GM12878 (cell line): ENCODE measurements at regions of chr1 and their contacts with region 1.

Region 1: GRCh38 chr1:183804881-183805841 is at the start of gene RGL1:
- DNase-seq: no peak
- ATAC-seq: peak; percentile 72
- H3K4me3 ChIP-seq: peak within 1 kb of the TSS; percentile 90
- H3K27ac ChIP-seq: peak within 1 kb of the TSS; percentile 93
- H3K4me1 ChIP-seq: peaks cover 11% of the 10 kb centered on the region; the same call in 1 of the 2 replicates
- H3K27me3 ChIP-seq: no peaks in the 10 kb centered on the region
- CTCF ChIP-seq: no peak
- EP300 ChIP-seq: 0 out of 4 replicates have a peak, but pooled peaks of 1 of the 2 experiments have one; percentile 14
- POLR2A ChIP-seq: peak; percentile 81
- RAD21 ChIP-seq: no peak
- polyA plus RNA-seq, gene RGL1: 8.1 to 9.4 TPM

Region 2: GRCh38 chr1:183432548-183432875 is 372.6 kb before region 1 on chr1:
- CTCF ChIA-PET with region 1: no interaction called
- POLR2A ChIA-PET with region 1: no interaction called
- RAD21 ChIA-PET with region 1: no interaction called
- SMC1A ChIA-PET with region 1: no interaction called
- in situ Hi-C with region 1: no loop called
- intact Hi-C with region 1: no loop called
- DNase-seq: no peak
- ATAC-seq: no peak
- H3K4me3 ChIP-seq: no peak overlapping the region
- H3K27ac ChIP-seq: no peak overlapping the region
- H3K4me1 ChIP-seq: no peaks in the 10 kb centered on the region
- H3K27me3 ChIP-seq: peaks cover 0 to 3% of the 10 kb centered on the region in 2 experiments; a peak in 1 of 4 replicates
- CTCF ChIP-seq: no peak
- EP300 ChIP-seq: no peak
- POLR2A ChIP-seq: no peak
- RAD21 ChIP-seq: no peak

Region 3: DNA sequence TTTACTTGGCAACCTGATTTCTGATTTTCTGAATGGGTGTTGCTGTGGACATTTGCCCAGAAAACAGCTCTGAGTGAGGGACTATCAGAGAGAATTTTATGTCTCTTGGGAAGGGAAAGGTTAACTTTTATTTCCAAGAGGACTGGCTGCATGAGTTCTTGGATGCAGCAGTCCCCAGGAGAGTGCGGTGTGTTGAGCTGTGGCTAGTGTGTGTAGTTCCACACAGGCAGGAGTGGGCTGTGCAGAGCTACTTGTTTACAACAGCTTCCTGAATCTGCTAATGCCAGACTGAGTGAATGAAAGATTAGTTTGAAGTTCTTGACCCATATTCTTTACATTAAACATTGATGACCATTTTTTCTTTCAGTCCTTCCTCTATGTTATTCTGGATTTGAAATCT is 111.1 kb before region 1 on chr1:
- CTCF ChIA-PET with region 1: no interaction called
- POLR2A ChIA-PET with region 1: no interaction called
- RAD21 ChIA-PET with region 1: interaction called, 4 read pairs
- SMC1A ChIA-PET with region 1: interaction called, 14 read pairs
- in situ Hi-C with region 1: no loop called
- intact Hi-C with region 1: loop called (anchors 5 kb)
- DNase-seq: no peak
- ATAC-seq: no peak
- H3K4me3 ChIP-seq: no peak overlapping the region
- H3K27ac ChIP-seq: no peak overlapping the region
- H3K4me1 ChIP-seq: peaks cover 11% of the 10 kb centered on the region; the same call in 1 of the 2 replicates
- H3K27me3 ChIP-seq: no peaks in the 10 kb centered on the region
- CTCF ChIP-seq: no peak
- EP300 ChIP-seq: no peak
- POLR2A ChIP-seq: no peak
- RAD21 ChIP-seq: no peak

Region 4: GRCh38 chr1:183734543-183735036 is 70.6 kb before region 1 on chr1:
- CTCF ChIA-PET with region 1: interaction called, 4 read pairs
- POLR2A ChIA-PET with region 1: no interaction called
- RAD21 ChIA-PET with region 1: no interaction called
- SMC1A ChIA-PET with region 1: interaction called, 6 read pairs
- in situ Hi-C with region 1: no loop called
- intact Hi-C with region 1: loop called (anchors 5 kb)
- DNase-seq: no peak
- ATAC-seq: no peak
- H3K4me3 ChIP-seq: no peak overlapping the region
- H3K27ac ChIP-seq: no peak overlapping the region
- H3K4me1 ChIP-seq: peaks cover 15% of the 10 kb centered on the region; the same call in 1 of the 2 replicates
- H3K27me3 ChIP-seq: no peaks in the 10 kb centered on the region
- CTCF ChIP-seq: no peak
- EP300 ChIP-seq: no peak
- POLR2A ChIP-seq: no peak
- RAD21 ChIP-seq: no peak

Region 5: DNA sequence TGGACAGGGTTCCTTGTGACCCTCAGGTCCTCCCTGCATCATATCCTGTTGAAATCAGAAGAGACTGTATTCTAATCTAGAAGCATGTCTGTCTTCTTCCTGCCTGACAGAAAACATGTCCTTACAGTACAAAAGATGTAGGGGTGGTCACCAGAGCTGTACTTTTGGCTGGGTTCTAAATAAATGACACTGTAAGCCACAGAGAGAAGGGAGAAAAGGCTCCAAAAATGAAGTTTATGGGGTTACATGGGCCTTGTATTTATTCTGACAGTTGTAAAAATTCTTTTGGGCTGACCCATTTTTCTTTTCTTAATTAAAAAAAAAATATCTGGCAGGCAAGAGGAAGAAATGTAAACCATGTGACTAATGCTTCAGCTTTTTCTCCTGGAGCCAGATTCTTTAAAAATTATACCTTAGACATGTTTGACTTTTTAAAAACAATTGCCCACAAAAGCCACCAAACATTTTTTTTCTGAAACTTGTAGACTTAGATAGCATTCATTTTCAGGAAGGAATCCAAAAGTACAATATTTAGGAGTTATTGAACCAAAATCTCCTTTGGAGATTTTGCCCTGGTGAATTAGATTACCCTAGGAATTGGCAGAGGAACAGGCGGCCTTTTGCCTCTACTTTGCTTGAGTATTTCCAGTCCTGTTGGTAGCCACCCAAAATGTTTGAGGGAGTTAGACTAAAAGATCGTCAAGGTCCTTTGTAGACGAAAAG is 16.9 kb after region 1 on chr1:
- CTCF ChIA-PET with region 1: interaction called, 3 read pairs
- POLR2A ChIA-PET with region 1: interaction called, 5 read pairs
- RAD21 ChIA-PET with region 1: interaction called, 3 read pairs
- SMC1A ChIA-PET with region 1: interaction called, 19 read pairs
- in situ Hi-C with region 1: no loop called
- intact Hi-C with region 1: no loop called
- DNase-seq: no peak
- ATAC-seq: peak; percentile 32; the same call in 2 of the 3 replicates
- H3K4me3 ChIP-seq: no peak overlapping the region
- H3K27ac ChIP-seq: no peak overlapping the region
- H3K4me1 ChIP-seq: peaks cover 9% of the 10 kb centered on the region
- H3K27me3 ChIP-seq: no peaks in the 10 kb centered on the region
- CTCF ChIP-seq: no peak
- EP300 ChIP-seq: no peak
- POLR2A ChIP-seq: no peak
- RAD21 ChIP-seq: no peak

Region 6: DNA sequence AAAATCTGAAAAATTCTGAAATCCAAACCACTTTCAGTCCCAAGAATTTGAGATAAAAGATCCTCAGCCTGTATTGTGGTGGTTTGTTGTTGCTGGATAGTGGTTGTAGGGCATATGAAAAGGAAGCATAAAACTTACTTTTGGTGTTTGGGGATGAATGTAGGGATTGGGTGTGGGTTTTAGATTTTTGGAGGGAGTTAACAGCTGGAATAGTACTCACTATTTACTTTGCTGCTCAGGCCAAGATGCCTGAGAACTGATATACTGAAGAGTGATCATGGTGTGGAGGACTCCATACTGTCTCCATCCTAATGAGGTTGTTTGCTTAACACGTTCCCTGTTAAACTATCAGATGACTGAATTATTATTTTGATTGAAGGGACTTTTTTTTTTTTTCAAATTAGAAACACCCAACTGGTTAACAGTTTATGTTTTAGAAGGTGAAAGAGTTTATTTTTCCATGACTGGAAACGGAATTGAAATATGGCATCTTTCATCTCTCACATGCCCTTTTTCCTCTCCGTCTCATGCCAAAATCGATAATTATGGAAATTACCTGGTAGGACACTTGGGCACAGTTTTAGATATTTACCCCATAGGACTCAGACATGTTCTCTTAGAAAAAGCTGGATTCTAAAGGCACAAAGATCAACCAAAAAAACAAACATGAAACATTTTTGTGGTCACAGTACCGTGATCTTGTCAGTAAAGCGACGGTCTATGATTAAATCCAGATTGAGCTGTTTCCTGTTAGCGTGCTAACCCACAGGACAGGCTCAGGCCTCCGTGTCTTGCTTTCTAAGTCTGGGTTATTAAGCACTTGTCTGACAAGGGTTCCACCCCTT is 37.0 kb after region 1 on chr1:
- CTCF ChIA-PET with region 1: interaction called, 7 read pairs
- POLR2A ChIA-PET with region 1: interaction called, 4 read pairs
- RAD21 ChIA-PET with region 1: interaction called, 20 read pairs
- SMC1A ChIA-PET with region 1: interaction called, 18 read pairs
- in situ Hi-C with region 1: no loop called
- intact Hi-C with region 1: loop called (anchors 1 kb)
- DNase-seq: peak; percentile 85
- ATAC-seq: peak; percentile 93
- H3K4me3 ChIP-seq: peak overlapping the region; percentile 12
- H3K27ac ChIP-seq: peak overlapping the region; percentile 99
- H3K4me1 ChIP-seq: peaks cover 46% of the 10 kb centered on the region
- H3K27me3 ChIP-seq: no peaks in the 10 kb centered on the region
- CTCF ChIP-seq: no peak
- EP300 ChIP-seq: peak; percentile 74 to 75; a peak in 3 of 4 replicates
- POLR2A ChIP-seq: peak; percentile 53; the same call in 1 of the 2 replicates
- RAD21 ChIP-seq: 0 out of 2 replicates have a peak, but pooled peaks have one; percentile 22

Region 7: GRCh38 chr1:183896466-183897048 is 91.4 kb after region 1 on chr1:
- CTCF ChIA-PET with region 1: no interaction called
- POLR2A ChIA-PET with region 1: interaction called, 4 read pairs
- RAD21 ChIA-PET with region 1: interaction called, 5 read pairs
- SMC1A ChIA-PET with region 1: interaction called, 5 read pairs
- in situ Hi-C with region 1: no loop called
- intact Hi-C with region 1: loop called (anchors 5 kb)
- DNase-seq: no peak
- ATAC-seq: peak; percentile 27
- H3K4me3 ChIP-seq: no peak overlapping the region; the same call in 1 of the 2 replicates
- H3K27ac ChIP-seq: peak overlapping the region; percentile 97
- H3K4me1 ChIP-seq: peaks cover 80% of the 10 kb centered on the region
- H3K27me3 ChIP-seq: no peaks in the 10 kb centered on the region
- CTCF ChIP-seq: no peak
- EP300 ChIP-seq: no peak
- POLR2A ChIP-seq: no peak
- RAD21 ChIP-seq: no peak